HepG2 (cell line): ENCODE measurements at regions of chrX and their contacts with region 1.

Region 1: DNA sequence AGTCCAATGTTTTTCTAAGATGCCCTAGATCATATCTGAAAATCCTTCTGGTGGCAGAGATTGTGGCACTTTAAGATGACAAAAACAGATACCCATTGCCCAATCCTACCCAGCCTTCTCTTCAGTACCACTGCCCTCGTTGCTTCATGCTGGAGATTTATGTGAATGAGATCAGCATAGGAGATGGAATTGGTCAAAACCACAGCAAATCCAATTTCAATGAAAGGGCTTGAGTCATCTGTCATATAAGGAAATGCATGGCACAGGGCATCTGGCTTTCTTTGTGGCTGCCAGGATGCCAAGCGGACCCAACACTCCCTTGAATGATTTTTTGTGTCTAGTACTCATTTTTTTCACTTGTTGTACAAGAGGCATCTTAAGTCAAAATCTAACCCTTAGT is 16.8 kb downstream of the AFF2 start:
- DNase-seq: no peak
- ATAC-seq: no peak
- H3K4me3 ChIP-seq: no peak overlapping the region
- H3K27ac ChIP-seq: no peak overlapping the region
- H3K4me1 ChIP-seq: no peaks in the 10 kb centered on the region
- H3K27me3 ChIP-seq: no peaks in the 10 kb centered on the region
- CTCF ChIP-seq: no peak
- EP300 ChIP-seq: no peak
- POLR2A ChIP-seq: no peak
- RAD21 ChIP-seq: no peak

Region 2: GRCh38 chrX:147958291-147958690 is 558.9 kb before region 1 on chrX:
- CTCF ChIA-PET with region 1: no interaction called
- POLR2A ChIA-PET with region 1: no interaction called
- in situ Hi-C with region 1: no loop called
- intact Hi-C with region 1: no loop called
- DNase-seq: no peak
- ATAC-seq: no peak
- H3K4me3 ChIP-seq: no peak overlapping the region
- H3K27ac ChIP-seq: no peak overlapping the region
- H3K4me1 ChIP-seq: no peaks in the 10 kb centered on the region
- H3K27me3 ChIP-seq: no peaks in the 10 kb centered on the region
- CTCF ChIP-seq: no peak
- EP300 ChIP-seq: no peak
- POLR2A ChIP-seq: no peak
- RAD21 ChIP-seq: no peak

Region 3: DNA sequence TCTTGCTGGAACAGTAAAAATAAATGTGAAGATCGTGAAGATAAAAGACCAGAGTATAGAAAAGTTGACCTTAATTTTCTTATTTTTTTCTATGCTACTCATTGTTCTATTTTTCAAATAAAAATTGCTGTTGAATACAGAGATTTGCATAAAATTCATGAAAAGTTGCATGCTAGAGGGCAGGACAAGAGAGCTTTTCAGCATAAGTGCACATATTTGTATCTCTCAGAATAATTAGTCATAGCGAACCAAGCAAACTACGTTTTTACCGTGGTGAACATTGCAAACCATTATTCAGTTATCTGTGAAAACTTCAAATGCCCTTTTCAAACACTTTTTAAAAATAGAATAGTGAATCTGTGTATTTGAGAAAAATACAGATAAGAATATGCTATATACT is 43.1 kb before region 1 on chrX:
- CTCF ChIA-PET with region 1: no interaction called
- POLR2A ChIA-PET with region 1: no interaction called
- in situ Hi-C with region 1: no loop called
- intact Hi-C with region 1: loop called (anchors 1 kb)
- DNase-seq: no peak
- ATAC-seq: no peak
- H3K4me3 ChIP-seq: no peak overlapping the region
- H3K27ac ChIP-seq: no peak overlapping the region
- H3K4me1 ChIP-seq: no peaks in the 10 kb centered on the region
- H3K27me3 ChIP-seq: no peaks in the 10 kb centered on the region
- CTCF ChIP-seq: no peak
- EP300 ChIP-seq: no peak
- POLR2A ChIP-seq: no peak
- RAD21 ChIP-seq: no peak

Region 4: DNA sequence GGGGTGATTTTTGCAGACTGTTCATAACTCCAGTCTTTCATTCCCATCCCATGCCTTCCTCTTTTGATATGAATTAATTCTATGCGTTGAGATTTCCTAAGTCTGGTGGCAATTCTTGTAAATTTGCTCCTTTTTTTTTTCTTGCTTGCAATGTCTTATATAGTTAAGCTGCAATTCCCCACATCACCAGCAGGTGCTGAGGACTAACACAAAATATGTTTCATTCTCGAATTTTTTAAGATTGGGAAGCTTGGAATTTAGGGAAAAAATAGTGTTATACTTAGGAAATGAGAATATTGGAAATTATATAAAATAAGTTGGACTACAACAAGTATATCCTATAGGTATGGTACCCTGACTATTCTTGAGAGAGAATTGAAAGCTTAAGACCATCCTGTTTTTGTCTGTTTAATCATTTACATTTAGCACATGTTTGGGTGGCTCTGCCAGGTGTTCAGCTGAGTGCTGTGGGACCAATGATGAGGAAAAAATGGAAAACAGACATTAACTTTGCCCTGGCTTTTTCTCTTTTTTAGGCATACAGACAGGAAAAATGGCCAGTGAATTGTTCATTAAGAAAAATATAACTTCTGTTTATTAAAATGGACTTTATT is 13.4 kb after region 1 on chrX:
- CTCF ChIA-PET with region 1: no interaction called
- POLR2A ChIA-PET with region 1: no interaction called
- in situ Hi-C with region 1: no loop called
- intact Hi-C with region 1: no loop called
- DNase-seq: no peak
- ATAC-seq: no peak
- H3K4me3 ChIP-seq: no peak overlapping the region
- H3K27ac ChIP-seq: no peak overlapping the region
- H3K4me1 ChIP-seq: no peaks in the 10 kb centered on the region
- H3K27me3 ChIP-seq: no peaks in the 10 kb centered on the region
- CTCF ChIP-seq: no peak
- EP300 ChIP-seq: no peak
- POLR2A ChIP-seq: no peak
- RAD21 ChIP-seq: no peak